Thyroid gland (tissue), 4 donors: ENCODE measurements at regions of chr7 and their contacts with region 1.

Region 1: DNA sequence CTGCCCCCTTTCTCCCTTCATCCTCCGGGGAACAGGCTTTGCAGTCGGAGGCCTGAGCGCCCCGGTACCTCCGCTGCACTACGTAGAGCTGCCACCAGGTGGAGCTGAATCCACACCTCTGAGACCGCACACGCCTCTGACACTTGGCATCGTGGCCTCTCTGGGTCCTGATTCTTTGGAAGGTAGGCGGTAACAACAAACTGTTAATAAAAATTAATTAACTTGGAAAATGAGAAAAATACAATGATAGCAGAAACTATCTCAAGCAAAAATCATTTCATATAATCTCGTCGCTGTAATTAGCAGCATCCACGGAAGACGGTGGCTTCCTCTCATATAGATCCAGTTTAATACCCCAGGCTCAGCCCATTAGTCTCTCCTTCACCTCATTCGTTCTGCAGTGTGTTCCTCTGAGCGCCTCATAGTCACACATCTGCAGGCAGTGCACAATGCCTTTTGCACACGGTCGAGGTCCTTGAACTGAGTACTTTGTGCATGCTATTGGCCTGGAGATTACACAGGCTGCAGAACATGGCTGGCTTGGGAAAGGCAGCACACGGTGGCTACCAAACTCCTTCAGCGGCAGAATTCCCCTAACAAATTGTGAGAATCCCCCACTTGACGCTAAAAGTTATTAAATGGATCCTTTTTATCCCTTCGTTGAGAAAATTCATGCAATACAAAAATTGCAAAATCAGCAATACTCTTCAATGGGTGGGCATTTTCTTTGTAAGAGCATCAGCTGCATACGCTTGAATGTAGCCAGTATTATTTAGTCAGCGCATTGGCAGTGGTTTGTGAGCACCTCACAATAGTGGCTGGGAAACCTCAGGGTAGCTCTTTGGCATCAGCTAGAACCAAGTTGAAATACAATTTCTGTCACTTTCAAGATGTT is 18.7 kb downstream of the OR9A2 start:
- DNase-seq: peak; percentile 80 to 81
- H3K4me3 ChIP-seq: no peak overlapping the region
- H3K27ac ChIP-seq: no peak overlapping the region
- H3K4me1 ChIP-seq: peaks cover 10 to 27% of the 10 kb centered on the region in 2 donors
- H3K27me3 ChIP-seq: no peaks in the 10 kb centered on the region
- CTCF ChIP-seq: peak; percentile 92 to 99 (median 94)
- POLR2A ChIP-seq: no peak

Region 2: GRCh38 chr7:142853739-142854371 is 154.4 kb before region 1 on chr7:
- intact Hi-C with region 1: loop called (anchors 10 kb)
- DNase-seq: peak; percentile 66 to 67
- H3K4me3 ChIP-seq: peak overlapping the region; percentile 47 to 66 (median 55)
- H3K27ac ChIP-seq: peak overlapping the region; percentile 65 to 78 (median 77)
- H3K4me1 ChIP-seq: peaks cover 11 to 22% of the 10 kb centered on the region in 2 donors
- H3K27me3 ChIP-seq: no peaks in the 10 kb centered on the region
- CTCF ChIP-seq: peak; percentile 52 to 91 (median 77)
- POLR2A ChIP-seq: no peak

Region 3: GRCh38 chr7:142880876-142881505 is 127.3 kb before region 1 on chr7:
- intact Hi-C with region 1: loop called (anchors 10 kb)
- DNase-seq: peak; percentile 39 to 43
- H3K4me3 ChIP-seq: no peak overlapping the region
- H3K27ac ChIP-seq: no peak overlapping the region
- H3K4me1 ChIP-seq: peaks cover 5 to 6% of the 10 kb centered on the region in 2 donors
- H3K27me3 ChIP-seq: no peaks in the 10 kb centered on the region
- CTCF ChIP-seq: peak; percentile 64 to 83 (median 75)
- POLR2A ChIP-seq: no peak

Region 4: GRCh38 chr7:143214789-143215679 is 206.8 kb after region 1 on chr7:
- intact Hi-C with region 1: loop called (anchors 2 kb)
- DNase-seq: peak; percentile 50 to 63
- H3K4me3 ChIP-seq: no peak overlapping the region
- H3K27ac ChIP-seq: no peak overlapping the region
- H3K4me1 ChIP-seq: no peaks in the 10 kb centered on the region
- H3K27me3 ChIP-seq: no peaks in the 10 kb centered on the region
- CTCF ChIP-seq: peak; percentile 95 to 100 (median 99)
- POLR2A ChIP-seq: no peak